ENCODE measurements at regions of chr19 and their contacts with region 1.

Region 1: GRCh38 chr19:8355631-8356402 is 8.1 kb upstream of the ANGPTL4 start:
- DNase-seq: peak; percentile 22 to 67 (median 33)
- H3K4me3 ChIP-seq: no peak overlapping the region
- H3K4me3 Mint-ChIP-seq: no peak overlapping the region
- H3K27ac ChIP-seq: no peak overlapping the region
- H3K27ac Mint-ChIP-seq: peak overlapping the region in 1 of 7 donors; percentile 63
- H3K4me1 ChIP-seq: peaks cover 4 to 5% of the 10 kb centered on the region in 2 donors
- H3K4me1 Mint-ChIP-seq: peaks cover 15% of the 10 kb centered on the region
- H3K27me3 ChIP-seq: peaks cover 2 to 10% of the 10 kb centered on the region in 2 donors
- H3K27me3 Mint-ChIP-seq: peaks cover 24 to 46% (median 41%) of the 10 kb centered on the region in 3 donors
- CTCF ChIP-seq: no peak

Region 2: GRCh38 chr19:8194528-8195267 is 161.1 kb before region 1 on chr19:
- intact Hi-C with region 1: no loop called
- DNase-seq: peak; percentile 51 to 59 (median 51)
- H3K4me3 ChIP-seq: peak overlapping the region; percentile 19 to 70 (median 34)
- H3K4me3 Mint-ChIP-seq: peak overlapping the region; percentile 71 to 84
- H3K27ac ChIP-seq: peak overlapping the region; percentile 94 to 98
- H3K27ac Mint-ChIP-seq: peak overlapping the region; percentile 95 to 99 (median 99)
- H3K4me1 ChIP-seq: peaks cover 42 to 52% of the 10 kb centered on the region in 2 donors
- H3K4me1 Mint-ChIP-seq: peaks cover 50% of the 10 kb centered on the region
- H3K27me3 ChIP-seq: no peaks in the 10 kb centered on the region
- H3K27me3 Mint-ChIP-seq: peaks cover under 1 to 8% (median 8%) of the 10 kb centered on the region in 3 donors
- CTCF ChIP-seq: no peak

Region 3: GRCh38 chr19:8389891-8390616 is 34.2 kb after region 1 on chr19 and contains the start of gene RAB11B:
- intact Hi-C with region 1: loop called (anchors 2 to 5 kb)
- DNase-seq: peak; percentile 99
- H3K4me3 ChIP-seq: peak within 1 kb of the TSS; percentile 53 to 76 (median 64)
- H3K4me3 Mint-ChIP-seq: peak within 1 kb of the TSS; percentile 88 to 91
- H3K27ac ChIP-seq: peak within 1 kb of the TSS; percentile 61 to 89
- H3K27ac Mint-ChIP-seq: peak within 1 kb of the TSS; percentile 91 to 98 (median 96)
- H3K4me1 ChIP-seq: peaks cover 18 to 25% of the 10 kb centered on the region in 2 donors
- H3K4me1 Mint-ChIP-seq: peaks cover 28% of the 10 kb centered on the region
- H3K27me3 ChIP-seq: no peaks in the 10 kb centered on the region
- H3K27me3 Mint-ChIP-seq: no peaks in the 10 kb centered on the region
- CTCF ChIP-seq: no peak
- polyA plus RNA-seq, gene RAB11B: 36.5 to 128 (median 45.4) TPM

Region 4: DNA sequence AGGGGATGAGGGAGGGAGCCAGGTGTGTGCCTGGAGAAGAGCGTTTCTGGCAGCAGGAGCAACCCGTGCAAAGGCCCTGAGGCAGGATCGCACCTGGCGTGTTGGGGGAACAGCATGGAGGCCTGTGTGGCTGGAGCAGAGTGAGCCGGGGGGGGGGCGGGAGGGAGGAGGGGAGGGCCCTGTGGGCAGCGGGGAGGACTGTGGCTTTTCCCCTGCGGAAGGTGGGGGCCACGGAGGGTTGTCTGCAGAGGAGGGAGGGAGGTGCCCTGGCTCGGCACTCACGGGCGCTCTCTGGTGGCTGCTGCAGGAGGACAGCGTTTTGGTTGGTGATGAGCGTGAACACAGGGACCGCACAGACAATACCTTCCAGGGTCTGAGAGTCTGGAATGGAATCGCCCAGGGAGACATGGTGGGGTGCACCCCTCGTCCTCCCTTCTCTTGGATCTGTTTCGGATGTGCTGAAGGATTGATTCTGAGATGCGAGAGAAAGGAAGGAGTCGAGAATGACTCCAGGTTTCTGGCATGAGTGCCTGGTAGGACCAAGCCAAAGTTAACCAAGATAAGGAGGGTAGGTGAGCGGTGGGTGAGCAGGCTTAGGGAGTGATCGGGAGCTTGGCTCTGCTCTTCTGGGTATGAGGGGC is 40.9 kb after region 1 on chr19:
- intact Hi-C with region 1: loop called (anchors 1 to 5 kb)
- DNase-seq: peak; percentile 37 to 49 (median 43)
- H3K4me3 ChIP-seq: no peak overlapping the region
- H3K4me3 Mint-ChIP-seq: no peak overlapping the region
- H3K27ac ChIP-seq: no peak overlapping the region
- H3K27ac Mint-ChIP-seq: peak overlapping the region in 4 of 7 donors; percentile 14 to 26 (median 20)
- H3K4me1 ChIP-seq: peaks cover 4% of the 10 kb centered on the region in 2 donors
- H3K4me1 Mint-ChIP-seq: peaks cover 7% of the 10 kb centered on the region
- H3K27me3 ChIP-seq: no peaks in the 10 kb centered on the region
- H3K27me3 Mint-ChIP-seq: peaks cover 0 to 1% (median 0%) of the 10 kb centered on the region in 3 donors
- CTCF ChIP-seq: peak; percentile 57